Activated CD4-positive, alpha-beta T cell treated with anti-CD3 and anti-CD28 coated beads for 36 hours (primary cell): ENCODE measurements at regions of chr2 and their contacts with region 1.

Region 1: DNA sequence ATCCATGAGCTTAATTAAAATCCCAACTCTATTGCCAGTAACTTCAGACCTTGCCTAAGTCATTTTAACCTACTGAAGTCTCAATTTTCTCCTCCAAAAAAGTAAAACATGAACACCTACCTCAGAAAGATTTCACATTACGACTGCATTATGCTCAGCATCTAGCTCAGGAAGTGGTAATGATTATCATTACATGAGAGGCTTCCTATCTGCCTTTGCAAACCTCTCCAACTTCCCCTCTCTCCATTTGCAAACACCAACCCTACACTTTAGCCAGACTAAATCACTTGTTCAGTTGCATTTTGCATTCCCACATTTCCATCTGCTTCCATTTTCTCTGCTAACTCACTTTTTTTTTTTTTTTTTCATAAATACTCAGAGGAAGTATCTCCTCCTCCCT is 6.8 kb downstream of the SLC38A11 start:
- DNase-seq: no peak
- ATAC-seq: no peak
- H3K4me3 Mint-ChIP-seq: no peak overlapping the region
- H3K27ac Mint-ChIP-seq: no peak overlapping the region
- H3K4me1 Mint-ChIP-seq: no peaks in the 10 kb centered on the region
- H3K27me3 Mint-ChIP-seq: peaks cover 8% of the 10 kb centered on the region

Region 2: GRCh38 chr2:164574925-164575324 is 373.6 kb before region 1 on chr2:
- CTCF ChIA-PET with region 1: no interaction called
- POLR2A ChIA-PET with region 1: no interaction called
- intact Hi-C with region 1: loop called in 1 of 2 experiments (anchors 10 kb)
- DNase-seq: no peak
- ATAC-seq: no peak
- H3K4me3 Mint-ChIP-seq: no peak overlapping the region
- H3K27ac Mint-ChIP-seq: no peak overlapping the region
- H3K4me1 Mint-ChIP-seq: no peaks in the 10 kb centered on the region
- H3K27me3 Mint-ChIP-seq: no peaks in the 10 kb centered on the region